ENCODE measurements at regions of chr17 and their contacts with region 1.

Region 1: GRCh38 chr17:81519284-81519955 is 6.8 kb upstream of the ACTG1 start:
- DNase-seq: peak; percentile 66 to 96
- H3K4me3 ChIP-seq: peak overlapping the region; percentile 65
- H3K27ac ChIP-seq: peak overlapping the region; percentile 45
- H3K4me1 ChIP-seq: peaks cover 25% of the 10 kb centered on the region
- H3K27me3 ChIP-seq: no peaks in the 10 kb centered on the region
- CTCF ChIP-seq: peak; percentile 64

Region 2: GRCh38 chr17:81282141-81282540 is 237.3 kb before region 1 on chr17:
- CTCF ChIA-PET with region 1: no interaction called
- POLR2A ChIA-PET with region 1: interaction called, 18 read pairs
- intact Hi-C with region 1: no loop called
- DNase-seq: no peak
- H3K4me3 ChIP-seq: no peak overlapping the region
- H3K27ac ChIP-seq: no peak overlapping the region
- H3K4me1 ChIP-seq: no peaks in the 10 kb centered on the region
- H3K27me3 ChIP-seq: no peaks in the 10 kb centered on the region
- CTCF ChIP-seq: no peak

Region 3: GRCh38 chr17:81553018-81553615 is 33.7 kb after region 1 on chr17:
- CTCF ChIA-PET with region 1: no interaction called
- POLR2A ChIA-PET with region 1: interaction called, 4 read pairs
- intact Hi-C with region 1: loop called (anchors 2 kb)
- DNase-seq: peak; percentile 78 to 85
- H3K4me3 ChIP-seq: peak overlapping the region; percentile 62
- H3K27ac ChIP-seq: 0 out of 2 replicates have a peak overlapping the region, but pooled peaks have one; percentile 16
- H3K4me1 ChIP-seq: peaks cover 10% of the 10 kb centered on the region
- H3K27me3 ChIP-seq: no peaks in the 10 kb centered on the region
- CTCF ChIP-seq: no peak

Region 4: DNA sequence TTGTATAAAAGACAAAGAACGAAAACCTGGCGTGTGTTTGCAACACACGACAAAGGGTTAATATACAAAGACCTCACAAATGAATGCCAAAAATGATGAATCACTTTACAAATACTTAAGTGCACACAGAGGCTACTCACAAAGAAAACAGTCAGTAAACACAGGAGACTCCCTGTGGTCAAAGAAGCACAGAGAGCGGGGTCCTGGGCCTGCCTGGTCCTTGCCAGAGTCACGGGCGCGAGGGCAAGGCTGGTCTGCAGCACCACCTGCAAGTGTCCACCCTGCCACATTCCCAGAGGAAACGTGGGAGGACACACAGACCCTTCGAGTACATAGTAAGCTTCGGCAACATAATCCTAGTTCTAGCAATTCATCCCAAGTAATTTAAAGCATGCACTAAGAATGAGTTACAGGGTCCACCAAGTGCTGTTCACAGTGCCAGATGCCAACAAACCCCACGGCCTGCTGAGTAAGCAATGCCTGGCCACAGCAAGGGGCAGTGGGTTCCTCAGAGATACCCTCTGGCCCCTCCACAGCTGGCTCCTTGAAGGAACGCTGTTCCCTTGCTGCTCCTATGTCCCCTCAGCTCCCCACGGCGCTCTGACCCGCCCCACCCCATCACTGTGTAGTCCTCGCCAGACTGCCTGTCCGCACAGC is 57.3 kb after region 1 on chr17:
- CTCF ChIA-PET with region 1: no interaction called
- POLR2A ChIA-PET with region 1: interaction called, 3 read pairs
- intact Hi-C with region 1: loop called (anchors 2 kb)
- DNase-seq: peak; percentile 79 to 84
- H3K4me3 ChIP-seq: peak overlapping the region; percentile 40; the same call in 1 of the 2 replicates
- H3K27ac ChIP-seq: peak overlapping the region; percentile 64
- H3K4me1 ChIP-seq: peaks cover 33% of the 10 kb centered on the region
- H3K27me3 ChIP-seq: no peaks in the 10 kb centered on the region
- CTCF ChIP-seq: no peak

Region 5: DNA sequence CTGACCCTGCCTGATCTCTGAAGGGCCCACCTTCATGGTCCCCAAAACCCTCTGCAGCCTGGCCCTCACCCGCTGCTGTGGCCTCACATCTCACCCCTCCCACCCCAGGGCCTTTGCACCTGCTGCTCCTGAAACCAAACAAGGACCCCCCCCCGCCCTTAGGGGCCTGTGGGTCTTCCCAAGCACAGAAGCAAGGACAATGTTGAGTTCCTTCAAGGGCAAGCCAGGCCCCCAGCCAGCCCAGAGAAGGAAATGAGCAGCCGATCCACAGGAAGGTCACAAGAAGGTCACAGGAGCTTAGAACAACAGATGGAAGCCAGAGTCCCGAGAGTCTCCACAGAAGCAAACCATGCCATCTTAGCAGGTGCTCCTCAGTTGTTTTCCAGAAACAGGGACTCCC is 137.4 kb after region 1 on chr17:
- CTCF ChIA-PET with region 1: no interaction called
- POLR2A ChIA-PET with region 1: no interaction called
- intact Hi-C with region 1: no loop called
- DNase-seq: no peak
- H3K4me3 ChIP-seq: no peak overlapping the region
- H3K27ac ChIP-seq: no peak overlapping the region
- H3K4me1 ChIP-seq: peaks cover 21% of the 10 kb centered on the region
- H3K27me3 ChIP-seq: no peaks in the 10 kb centered on the region
- CTCF ChIP-seq: no peak